Sigmoid colon (tissue), 7 donors: ENCODE measurements at regions of chr11 and their contacts with region 1.

Region 1: GRCh38 chr11:19951558-19952115 is 208.6 kb downstream of the DBX1 start:
- DNase-seq: no peak
- H3K4me3 ChIP-seq: no peak overlapping the region
- H3K27ac ChIP-seq: peak overlapping the region in 3 of 4 donors; percentile 15 to 66 (median 65)
- H3K4me1 ChIP-seq: peaks cover 0 to 44% (median 40%) of the 10 kb centered on the region in 4 donors
- H3K27me3 ChIP-seq: no peaks in the 10 kb centered on the region
- CTCF ChIP-seq: peak; percentile 60 to 75 (median 65)
- EP300 ChIP-seq: no peak
- POLR2A ChIP-seq: no peak

Region 2: GRCh38 chr11:19903620-19904069 is 48.0 kb before region 1 on chr11:
- intact Hi-C with region 1: loop called (anchors 5 kb)
- DNase-seq: peak; percentile 87
- H3K4me3 ChIP-seq: no peak overlapping the region
- H3K27ac ChIP-seq: peak overlapping the region in 3 of 4 donors; percentile 56 to 60 (median 59)
- H3K4me1 ChIP-seq: peaks cover 0 to 58% (median 48%) of the 10 kb centered on the region in 4 donors
- H3K27me3 ChIP-seq: no peaks in the 10 kb centered on the region
- CTCF ChIP-seq: peak; percentile 54 to 79 (median 66)
- EP300 ChIP-seq: no peak
- POLR2A ChIP-seq: no peak

Region 3: GRCh38 chr11:20056109-20056949 is 104.7 kb after region 1 on chr11:
- intact Hi-C with region 1: loop called (anchors 10 kb)
- DNase-seq: peak; percentile 85
- H3K4me3 ChIP-seq: no peak overlapping the region
- H3K27ac ChIP-seq: peak overlapping the region; percentile 46 to 68 (median 56)
- H3K4me1 ChIP-seq: peaks cover 0 to 56% (median 49%) of the 10 kb centered on the region in 4 donors
- H3K27me3 ChIP-seq: no peaks in the 10 kb centered on the region
- CTCF ChIP-seq: no peak
- EP300 ChIP-seq: no peak
- POLR2A ChIP-seq: no peak

Region 4: DNA sequence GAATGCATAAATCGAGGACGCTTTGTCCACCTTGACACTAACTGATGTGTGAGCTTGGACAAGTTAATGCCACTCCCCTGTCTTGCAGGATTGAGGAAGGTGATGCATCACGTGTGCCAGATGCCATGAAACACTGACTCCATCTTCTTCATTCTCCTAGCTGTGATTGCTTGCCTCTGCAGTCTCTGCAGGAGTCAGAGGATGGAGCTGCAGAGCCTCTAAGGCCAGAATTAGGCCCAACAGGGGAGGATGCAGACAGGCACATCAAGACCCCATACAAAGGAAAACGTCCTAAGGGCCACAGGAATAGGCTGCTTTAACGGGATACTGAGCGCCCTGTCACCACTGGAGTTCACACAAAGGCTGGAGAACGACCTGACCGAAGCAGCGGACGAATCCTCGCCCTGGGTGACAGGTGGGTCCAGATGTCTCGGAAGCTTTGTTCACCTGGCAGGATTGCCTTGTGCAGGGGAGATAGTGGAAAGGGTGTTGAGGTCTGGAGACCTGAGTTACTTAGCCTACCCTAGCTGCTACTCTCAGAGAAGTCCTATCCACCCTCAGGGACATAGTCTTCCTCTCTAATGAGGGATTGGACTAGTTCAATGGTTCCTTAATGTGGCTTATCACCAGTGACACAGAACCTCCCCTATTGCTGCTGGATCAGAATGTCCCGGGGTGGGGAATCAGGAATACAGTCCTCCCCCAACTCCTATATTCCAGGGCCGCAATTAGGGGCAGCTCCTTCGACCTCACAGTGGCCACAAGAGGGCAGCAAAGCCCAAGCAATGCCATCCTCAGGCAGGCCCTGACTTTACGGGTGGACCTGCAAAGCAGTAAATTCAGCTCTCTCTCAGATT is 176.3 kb after region 1 on chr11:
- intact Hi-C with region 1: loop called (anchors 1 kb)
- DNase-seq: peak; percentile 87
- H3K4me3 ChIP-seq: no peak overlapping the region
- H3K27ac ChIP-seq: no peak overlapping the region
- H3K4me1 ChIP-seq: peaks cover 0 to 8% (median 7%) of the 10 kb centered on the region in 4 donors
- H3K27me3 ChIP-seq: no peaks in the 10 kb centered on the region
- CTCF ChIP-seq: peak; percentile 47 to 82 (median 76)
- EP300 ChIP-seq: no peak
- POLR2A ChIP-seq: no peak

Region 5: DNA sequence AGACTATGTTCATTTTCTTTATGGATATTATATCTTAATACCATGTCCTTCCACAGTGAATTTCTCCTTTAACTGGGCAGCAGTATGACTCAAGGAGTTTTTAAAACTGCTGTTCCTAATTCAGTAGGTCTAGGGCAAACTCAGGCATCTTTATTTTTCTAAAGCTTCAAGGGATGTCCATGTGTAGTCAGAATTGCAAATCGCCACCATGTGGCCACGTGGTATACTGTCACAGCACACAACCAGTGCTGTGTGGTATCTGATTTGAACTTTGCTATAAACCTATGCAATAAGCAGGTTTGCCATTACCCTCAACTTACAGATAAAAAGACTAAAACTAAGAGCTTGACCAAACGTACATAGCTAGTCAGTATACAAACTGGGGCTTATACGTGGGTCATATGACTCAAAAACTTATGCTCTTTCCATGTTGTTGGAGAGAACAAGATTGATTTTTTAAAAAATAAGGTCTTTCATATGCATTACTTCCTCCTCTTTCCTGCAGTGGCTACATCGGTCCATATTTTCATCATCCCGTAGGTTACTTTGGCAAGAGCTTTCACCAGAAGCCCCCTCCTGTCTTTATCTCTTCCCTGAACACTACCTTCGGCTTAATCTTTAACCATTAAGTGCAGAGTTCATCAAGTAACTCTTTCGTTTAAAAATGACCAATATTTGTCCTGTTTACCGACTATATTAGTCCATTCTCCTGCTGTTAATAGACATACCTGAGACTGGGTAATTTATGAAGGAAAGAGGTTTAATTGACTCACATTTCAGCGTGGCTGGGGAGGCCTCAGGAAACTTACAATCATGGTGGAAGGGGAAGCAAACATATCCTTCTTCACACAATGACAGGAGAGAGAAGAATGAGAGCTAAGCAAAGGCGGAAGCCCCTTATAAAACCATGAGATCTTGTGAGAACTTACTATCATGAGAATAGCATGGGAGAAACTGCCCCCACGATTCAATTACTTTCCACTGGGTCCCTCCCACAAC is 403.9 kb after region 1 on chr11:
- intact Hi-C with region 1: loop called (anchors 5 kb)
- DNase-seq: no peak
- H3K4me3 ChIP-seq: no peak overlapping the region
- H3K27ac ChIP-seq: no peak overlapping the region
- H3K4me1 ChIP-seq: peaks cover 0 to 5% (median 3%) of the 10 kb centered on the region in 4 donors
- H3K27me3 ChIP-seq: no peaks in the 10 kb centered on the region
- CTCF ChIP-seq: peak in 1 of 4 experiments; percentile 48
- EP300 ChIP-seq: no peak
- POLR2A ChIP-seq: no peak